Vagina (tissue), 2 donors: ENCODE measurements at regions of chr3 and their contacts with region 1.

Region 1: DNA sequence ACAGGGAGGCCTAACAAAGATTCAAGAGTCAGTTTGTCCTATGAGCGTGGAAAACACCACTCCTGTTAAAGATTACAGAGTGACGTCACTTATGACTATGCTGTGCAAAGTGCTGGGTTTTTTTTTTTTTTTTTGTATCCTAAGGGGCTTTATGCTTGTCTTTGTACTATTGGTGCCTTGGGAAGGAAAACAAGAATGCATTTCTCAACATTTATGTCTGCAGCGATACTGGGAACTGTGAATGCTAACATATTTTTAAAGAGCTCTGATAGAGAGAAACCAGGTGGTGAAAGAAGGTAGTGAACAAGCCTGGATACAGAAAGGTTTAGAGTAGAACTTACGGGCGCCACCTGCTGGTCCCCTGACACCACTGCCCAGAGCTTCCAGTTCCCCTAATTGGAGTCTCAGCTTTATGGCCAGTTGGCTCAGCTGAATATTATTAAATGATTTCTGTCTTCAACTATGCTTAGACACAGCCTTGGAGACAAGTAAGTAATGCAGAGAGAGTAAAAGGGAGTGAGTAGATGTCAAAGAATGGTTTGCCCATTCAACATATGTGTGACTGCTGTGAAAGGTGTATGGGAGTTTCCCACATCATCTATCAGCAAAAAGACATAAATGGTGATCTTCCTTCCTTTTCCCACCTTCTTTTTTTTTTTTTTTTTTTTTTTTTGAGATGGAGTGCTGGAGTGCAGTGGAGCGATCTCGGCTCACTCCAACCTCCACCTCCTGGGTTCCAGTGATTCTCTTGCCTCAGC is 807.9 kb upstream of the CFAP20DC start:
- DNase-seq: no peak
- H3K4me3 ChIP-seq: no peak overlapping the region
- H3K27ac ChIP-seq: no peak overlapping the region
- H3K4me1 ChIP-seq: no peaks in the 10 kb centered on the region
- H3K27me3 ChIP-seq: no peaks in the 10 kb centered on the region
- CTCF ChIP-seq: peak; percentile 66 to 81 (median 73)
- POLR2A ChIP-seq: no peak

Region 2: DNA sequence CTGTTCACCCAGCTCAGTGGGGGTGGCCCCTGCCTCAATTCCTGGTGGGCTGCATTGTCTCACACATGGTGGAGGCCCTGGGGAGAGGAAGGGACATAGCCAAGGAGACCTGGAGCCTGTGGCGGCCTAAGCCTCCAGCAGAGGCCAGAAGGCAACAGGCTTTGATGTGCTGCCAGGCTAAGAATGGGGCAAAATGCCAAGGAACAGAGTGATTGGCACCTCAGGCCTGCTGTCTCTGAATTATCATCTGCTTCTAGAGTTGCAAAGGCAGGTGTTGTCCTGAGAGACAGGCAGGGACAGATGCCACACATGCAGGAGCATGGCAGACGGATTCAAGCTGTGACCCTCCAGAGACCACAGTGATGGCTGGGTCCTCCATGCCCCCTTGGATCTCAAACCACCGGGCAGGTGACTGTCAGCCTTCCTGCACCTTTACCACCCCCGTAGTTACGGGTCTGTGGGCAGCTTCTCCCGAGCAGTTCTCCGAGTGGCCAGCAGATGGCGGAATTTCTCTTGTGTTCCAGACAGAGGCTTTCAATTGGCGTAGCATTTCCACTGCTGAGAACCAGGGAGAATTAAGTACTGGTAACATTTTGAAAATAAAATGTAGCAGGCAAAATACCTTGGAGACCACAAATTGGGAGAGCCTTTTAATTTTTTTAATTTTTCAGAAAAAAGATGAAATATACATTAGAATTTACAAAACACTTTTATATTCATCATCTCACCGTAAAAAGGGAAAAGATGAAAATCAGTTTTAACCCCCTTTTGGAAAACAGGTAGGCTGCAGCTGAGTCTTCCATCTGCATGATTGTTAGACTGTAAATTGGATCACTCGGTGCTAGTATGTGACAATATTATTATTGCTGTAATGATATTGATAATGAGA is 282.4 kb before region 1 on chr3:
- intact Hi-C with region 1: loop called (anchors 5 kb)
- DNase-seq: peak in 1 of 2 donors; percentile 91
- H3K4me3 ChIP-seq: no peak overlapping the region
- H3K27ac ChIP-seq: no peak overlapping the region
- H3K4me1 ChIP-seq: peaks cover 4% of the 10 kb centered on the region
- H3K27me3 ChIP-seq: no peaks in the 10 kb centered on the region
- CTCF ChIP-seq: peak; percentile 88 to 96 (median 94)
- POLR2A ChIP-seq: no peak

Region 3: DNA sequence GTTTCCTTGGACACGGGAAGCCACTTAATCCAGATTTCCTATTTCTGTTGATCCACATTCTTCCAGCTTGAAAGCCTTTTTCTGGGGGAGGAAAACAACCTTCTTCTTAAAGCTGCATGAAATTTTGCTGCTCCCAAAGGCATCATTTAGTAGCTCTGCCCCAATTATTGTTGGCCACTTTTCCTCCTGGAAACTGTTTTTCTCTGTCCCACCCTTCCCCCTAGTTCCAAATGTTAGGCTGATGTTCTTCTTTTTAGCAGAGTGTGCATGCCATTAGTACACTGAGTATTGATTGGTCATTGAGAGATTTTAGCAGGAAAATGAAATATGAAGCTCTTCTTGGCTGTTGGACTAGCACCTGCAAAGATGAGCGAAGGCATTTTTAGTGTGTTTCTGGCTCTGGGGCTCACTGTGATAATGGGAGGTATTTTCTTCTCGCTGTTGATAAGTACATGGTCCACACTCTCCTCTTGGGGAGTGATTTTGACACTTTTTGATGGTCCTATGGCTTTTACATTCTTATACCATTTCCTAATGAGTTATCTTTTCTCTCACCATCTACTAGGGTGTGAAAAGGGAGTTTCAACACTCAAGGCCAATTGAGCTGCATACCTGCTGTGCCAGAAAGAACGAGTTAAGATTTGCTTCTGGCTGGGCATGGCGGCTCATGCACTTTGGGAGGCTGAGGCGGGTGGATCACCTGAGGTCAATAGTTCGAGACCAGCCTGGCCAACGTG is 1904.1 kb after region 1 on chr3:
- intact Hi-C with region 1: no loop called
- DNase-seq: no peak
- H3K4me3 ChIP-seq: no peak overlapping the region
- H3K27ac ChIP-seq: no peak overlapping the region
- H3K4me1 ChIP-seq: no peaks in the 10 kb centered on the region
- H3K27me3 ChIP-seq: no peaks in the 10 kb centered on the region
- CTCF ChIP-seq: no peak
- POLR2A ChIP-seq: no peak